HepG2 (cell line): ENCODE measurements at regions of chr7 and their contacts with region 1.

Region 1: GRCh38 chr7:106518967-106519366 is 142.0 kb downstream of the CCDC71L start:
- DNase-seq: no peak
- ATAC-seq: no peak
- H3K4me3 ChIP-seq: no peak overlapping the region
- H3K27ac ChIP-seq: no peak overlapping the region
- H3K4me1 ChIP-seq: no peaks in the 10 kb centered on the region
- H3K27me3 ChIP-seq: peaks cover 0 to 8% of the 10 kb centered on the region in 2 experiments; a peak in 3 of 5 replicates
- CTCF ChIP-seq: no peak
- EP300 ChIP-seq: no peak
- POLR2A ChIP-seq: no peak
- RAD21 ChIP-seq: no peak

Region 2: DNA sequence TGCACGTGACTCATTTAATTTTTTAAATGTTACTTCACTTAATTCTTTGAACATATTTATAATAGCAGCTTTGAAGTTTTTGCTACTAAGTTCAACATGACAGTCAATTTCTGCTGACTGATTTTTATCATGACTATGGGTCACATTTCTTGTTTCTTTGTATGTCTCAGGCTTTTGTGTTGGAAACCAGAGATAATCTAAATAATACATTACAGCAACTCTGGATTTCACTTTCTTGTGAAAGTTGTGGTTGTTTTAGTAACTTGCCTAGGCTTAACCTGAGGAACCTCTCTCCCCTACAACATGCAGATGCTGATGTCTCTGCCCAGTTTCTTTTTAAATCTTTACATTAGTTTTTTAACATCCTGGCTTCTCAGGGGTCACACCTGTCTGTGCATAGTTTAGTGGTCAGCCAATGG is 38.8 kb before region 1 on chr7:
- CTCF ChIA-PET with region 1: no interaction called
- POLR2A ChIA-PET with region 1: no interaction called
- in situ Hi-C with region 1: no loop called
- intact Hi-C with region 1: loop called (anchors 1 kb)
- DNase-seq: no peak
- ATAC-seq: no peak
- H3K4me3 ChIP-seq: no peak overlapping the region
- H3K27ac ChIP-seq: no peak overlapping the region
- H3K4me1 ChIP-seq: no peaks in the 10 kb centered on the region
- H3K27me3 ChIP-seq: no peaks in the 10 kb centered on the region
- CTCF ChIP-seq: no peak
- EP300 ChIP-seq: no peak
- POLR2A ChIP-seq: no peak
- RAD21 ChIP-seq: no peak